ENCODE measurements at regions of chr5 and their contacts with region 1.

Region 1: DNA sequence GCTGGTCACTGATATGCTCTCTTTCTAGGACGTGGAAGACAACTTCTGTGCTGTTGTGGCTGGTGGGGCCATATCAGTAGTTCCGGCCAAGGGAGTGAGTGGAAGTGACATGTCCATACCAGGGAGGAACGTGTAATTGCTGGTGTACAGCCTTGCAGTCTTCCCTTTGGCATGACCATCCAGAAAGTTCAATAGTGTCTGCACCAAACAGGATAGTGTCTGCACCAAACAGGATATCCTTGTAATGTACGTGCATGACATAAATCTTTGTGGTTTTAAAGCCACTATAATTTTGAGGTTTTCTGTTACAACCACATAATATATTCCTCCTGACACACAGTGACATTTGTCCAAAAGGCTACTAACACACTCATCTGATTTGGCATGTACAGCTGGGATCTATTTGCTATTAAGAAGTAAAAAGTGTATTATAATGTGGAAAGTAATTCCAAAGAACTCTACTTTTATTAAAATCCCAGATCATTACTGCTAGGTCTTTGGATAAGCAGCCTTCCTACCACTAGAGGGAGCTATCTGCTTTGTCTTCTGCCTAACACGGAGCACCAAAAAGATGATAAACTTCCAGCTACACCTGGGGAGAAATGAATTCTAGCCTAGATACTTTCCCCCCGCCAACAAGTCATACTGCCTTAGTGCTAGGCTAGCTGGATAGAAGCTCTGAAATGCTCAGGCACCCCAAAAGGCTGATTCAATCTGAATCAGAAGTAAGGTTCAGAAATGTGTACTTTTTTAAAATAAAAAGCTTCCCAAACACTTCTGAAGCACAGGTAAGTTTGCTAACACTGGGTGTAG is 52.7 kb downstream of the RNF145 start:
- DNase-seq: peak; percentile 68
- H3K4me3 ChIP-seq: no peak overlapping the region
- H3K27ac ChIP-seq: no peak overlapping the region
- H3K4me1 ChIP-seq: no peaks in the 10 kb centered on the region
- H3K27me3 ChIP-seq: no peaks in the 10 kb centered on the region
- CTCF ChIP-seq: peak; percentile 82 to 95 (median 86)
- POLR2A ChIP-seq: no peak

Region 2: DNA sequence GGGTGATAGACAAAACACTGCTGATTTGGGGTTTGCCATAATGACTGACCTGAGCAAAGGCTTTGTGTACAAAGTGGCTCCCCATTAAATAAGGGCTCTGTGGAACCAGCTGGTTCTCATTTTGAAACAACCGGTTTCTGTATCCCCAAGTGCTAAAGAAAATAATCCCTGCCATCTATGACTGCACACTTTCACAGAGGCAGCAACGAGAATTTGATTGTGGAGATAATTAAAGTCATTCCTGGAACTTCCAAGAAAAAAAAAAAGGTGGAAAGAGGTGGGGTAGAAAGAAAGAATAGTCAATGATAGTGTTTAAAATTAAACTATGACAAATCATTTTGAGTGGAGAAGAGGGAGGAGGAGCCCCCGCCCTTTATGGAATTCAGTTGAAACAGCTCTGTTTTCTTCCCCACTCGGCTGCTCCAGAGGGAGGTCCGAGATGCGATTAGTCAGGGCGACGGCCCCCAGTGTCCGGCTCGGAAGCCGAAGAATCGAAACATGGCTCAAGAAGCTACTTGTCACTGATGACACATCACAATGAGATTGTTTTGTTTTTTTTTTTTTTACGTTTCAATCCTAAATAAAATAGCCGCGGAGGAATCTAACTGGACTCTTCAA is 95.3 kb before region 1 on chr5:
- intact Hi-C with region 1: no loop called
- DNase-seq: no peak
- H3K4me3 ChIP-seq: no peak overlapping the region
- H3K27ac ChIP-seq: no peak overlapping the region
- H3K4me1 ChIP-seq: no peaks in the 10 kb centered on the region
- H3K27me3 ChIP-seq: no peaks in the 10 kb centered on the region
- CTCF ChIP-seq: no peak
- POLR2A ChIP-seq: no peak

Region 3: DNA sequence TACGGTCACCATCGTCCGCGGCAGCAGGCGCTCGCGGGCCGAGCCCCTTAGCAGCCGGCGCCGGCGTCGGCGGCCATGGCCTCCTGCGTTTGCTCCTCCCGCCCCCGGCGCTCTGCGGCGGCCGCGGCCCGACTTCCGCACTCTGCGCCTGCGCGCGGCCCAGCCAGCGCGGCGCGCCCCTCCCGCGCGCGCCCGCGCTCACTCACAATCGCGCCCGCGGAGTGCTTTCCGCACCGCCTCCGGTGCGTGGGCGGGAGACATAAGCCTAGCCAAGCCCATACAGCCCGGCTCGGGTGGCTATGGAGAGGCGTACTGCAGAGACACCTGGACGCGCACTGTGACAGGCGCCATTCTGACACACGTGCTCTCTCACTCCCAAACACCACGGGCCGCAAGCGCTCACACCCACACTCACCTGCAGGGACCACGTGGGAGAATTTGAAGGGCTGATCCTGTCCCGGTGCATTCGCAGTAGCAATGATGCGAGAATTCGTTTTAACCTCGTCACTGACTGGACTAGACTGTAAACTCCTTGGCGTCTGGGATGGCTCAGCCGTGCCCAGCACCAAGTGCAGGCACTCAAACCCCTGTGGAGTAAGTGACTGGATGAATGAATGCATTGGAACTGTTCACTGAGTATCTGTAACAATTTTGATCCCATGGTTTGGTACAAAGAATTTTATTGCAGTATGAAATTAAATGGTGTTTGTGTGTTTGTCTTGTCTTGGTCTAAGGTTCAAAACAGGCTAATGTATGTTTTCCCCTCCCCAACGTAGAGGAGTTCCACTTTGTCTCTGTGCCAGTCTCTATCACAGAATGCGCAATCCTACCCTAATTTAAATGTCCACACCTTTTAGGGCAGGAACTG is 53.0 kb after region 1 on chr5 and contains the start of gene RNF145:
- intact Hi-C with region 1: loop called (anchors 5 kb)
- DNase-seq: peak; percentile 87
- H3K4me3 ChIP-seq: peak within 1 kb of the TSS; percentile 92
- H3K27ac ChIP-seq: peak within 1 kb of the TSS; percentile 94 to 96
- H3K4me1 ChIP-seq: peaks cover 11% of the 10 kb centered on the region
- H3K27me3 ChIP-seq: no peaks in the 10 kb centered on the region
- CTCF ChIP-seq: no peak
- POLR2A ChIP-seq: peak; percentile 75
- total RNA-seq, gene RNF145: 38.6 to 50.5 TPM

Region 4: DNA sequence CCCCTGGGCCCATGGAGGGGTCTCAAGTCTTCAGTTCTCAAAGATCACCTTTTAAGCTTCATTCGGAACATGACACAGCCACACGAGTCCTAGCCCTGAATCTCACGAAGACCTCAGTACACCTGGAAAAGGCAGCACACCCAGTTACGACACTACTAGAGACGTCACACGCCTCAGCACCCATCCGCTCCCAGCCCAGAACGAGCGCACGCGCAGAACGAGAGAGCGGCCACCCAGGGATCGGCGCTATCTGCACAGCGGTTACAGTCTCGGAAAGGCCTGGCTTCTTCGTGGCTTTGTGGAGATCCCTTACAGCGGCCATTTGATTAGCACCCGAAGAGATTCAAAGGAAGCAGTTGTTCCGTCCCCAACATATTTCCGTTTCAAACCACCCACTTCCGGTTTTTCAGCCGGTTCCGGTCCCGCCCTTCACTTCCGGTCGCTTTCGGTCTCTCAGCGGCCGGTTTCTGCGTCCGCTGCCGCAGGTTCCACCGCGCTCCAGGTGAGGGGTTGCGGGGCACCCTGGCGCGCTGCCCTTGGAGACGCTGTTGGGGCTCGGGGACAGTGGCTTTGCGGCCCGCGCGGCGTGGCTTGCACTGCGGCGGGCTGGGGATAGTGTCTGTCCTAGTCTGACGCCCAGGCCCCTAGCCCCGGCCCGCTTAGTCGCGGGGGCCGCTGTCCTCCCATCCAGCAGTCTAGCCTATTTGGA is 106.4 kb after region 1 on chr5 and contains the start of gene UBLCP1:
- intact Hi-C with region 1: loop called (anchors 5 kb)
- DNase-seq: peak; percentile 72
- H3K4me3 ChIP-seq: peak within 1 kb of the TSS; percentile 72 to 99
- H3K27ac ChIP-seq: peak within 1 kb of the TSS; percentile 89
- H3K4me1 ChIP-seq: no peaks in the 10 kb centered on the region
- H3K27me3 ChIP-seq: no peaks in the 10 kb centered on the region
- CTCF ChIP-seq: no peak
- POLR2A ChIP-seq: peak; percentile 23
- total RNA-seq, gene UBLCP1: 17.0 to 22.8 TPM

Region 5: DNA sequence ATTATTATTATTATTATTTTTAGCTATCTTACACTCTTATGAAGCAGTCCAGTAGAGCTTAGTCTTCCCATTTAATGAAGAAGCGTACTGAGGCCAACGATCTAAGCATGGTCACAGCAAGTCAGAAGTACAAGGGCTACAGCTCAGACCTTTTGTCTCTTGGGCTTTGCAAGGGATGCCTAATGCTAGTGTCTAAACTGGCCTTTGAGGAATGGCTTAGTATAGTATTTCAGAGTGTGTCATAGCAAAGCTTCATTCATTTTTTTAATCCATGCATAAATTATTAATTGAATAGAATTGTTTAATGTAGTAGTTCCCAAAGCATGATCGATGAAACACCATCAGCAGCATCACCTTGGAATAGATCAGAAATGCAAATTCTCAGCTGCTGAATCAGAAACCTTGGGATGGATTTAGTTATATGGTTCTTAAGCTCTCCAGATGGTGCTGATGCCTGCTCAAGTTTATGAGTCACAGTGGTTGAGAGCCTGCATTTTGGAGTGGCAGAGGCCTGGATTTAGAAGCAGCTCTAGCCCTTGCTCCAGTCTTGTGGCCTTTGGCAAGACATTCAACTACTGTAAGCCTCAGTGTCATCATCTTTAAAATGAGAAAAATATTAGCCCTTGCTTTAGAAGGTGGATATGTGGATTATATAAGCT is 167.6 kb after region 1 on chr5:
- intact Hi-C with region 1: no loop called
- DNase-seq: no peak
- H3K4me3 ChIP-seq: no peak overlapping the region
- H3K27ac ChIP-seq: no peak overlapping the region
- H3K4me1 ChIP-seq: no peaks in the 10 kb centered on the region
- H3K27me3 ChIP-seq: no peaks in the 10 kb centered on the region
- CTCF ChIP-seq: no peak
- POLR2A ChIP-seq: no peak

Region 6: GRCh38 chr5:159987031-159987674 is 830.5 kb after region 1 on chr5:
- intact Hi-C with region 1: loop called (anchors 10 kb)
- DNase-seq: peak; percentile 87
- H3K4me3 ChIP-seq: peak overlapping the region; percentile 20 to 38
- H3K27ac ChIP-seq: peak overlapping the region; percentile 15 to 33
- H3K4me1 ChIP-seq: no peaks in the 10 kb centered on the region
- H3K27me3 ChIP-seq: no peaks in the 10 kb centered on the region
- CTCF ChIP-seq: peak; percentile 60 to 91 (median 75)
- POLR2A ChIP-seq: peak; percentile 36

Region 7: DNA sequence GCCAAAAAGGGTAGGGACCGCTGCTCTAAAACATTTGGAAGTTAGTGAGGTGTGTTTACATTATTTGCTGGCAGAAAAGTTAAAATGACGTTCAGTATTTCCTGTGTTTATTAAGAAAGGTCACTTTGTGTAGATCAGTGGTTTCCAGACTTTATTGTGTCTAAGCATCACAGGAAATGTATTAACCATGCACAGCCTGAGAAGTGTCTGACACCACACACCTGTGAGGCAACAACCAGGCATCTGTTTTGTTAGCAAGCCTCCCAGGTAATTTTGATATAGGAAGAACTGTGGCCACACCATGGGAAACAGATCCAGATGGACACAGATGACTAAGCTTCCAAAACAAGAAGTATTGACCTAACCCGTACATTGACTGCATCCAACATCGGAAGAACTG is 864.3 kb after region 1 on chr5:
- intact Hi-C with region 1: no loop called
- DNase-seq: no peak
- H3K4me3 ChIP-seq: no peak overlapping the region
- H3K27ac ChIP-seq: no peak overlapping the region
- H3K4me1 ChIP-seq: no peaks in the 10 kb centered on the region
- H3K27me3 ChIP-seq: no peaks in the 10 kb centered on the region
- CTCF ChIP-seq: no peak
- POLR2A ChIP-seq: no peak